Lower leg skin (tissue), 4 donors: ENCODE measurements at regions of chr21 and their contacts with region 1.

Region 1: DNA sequence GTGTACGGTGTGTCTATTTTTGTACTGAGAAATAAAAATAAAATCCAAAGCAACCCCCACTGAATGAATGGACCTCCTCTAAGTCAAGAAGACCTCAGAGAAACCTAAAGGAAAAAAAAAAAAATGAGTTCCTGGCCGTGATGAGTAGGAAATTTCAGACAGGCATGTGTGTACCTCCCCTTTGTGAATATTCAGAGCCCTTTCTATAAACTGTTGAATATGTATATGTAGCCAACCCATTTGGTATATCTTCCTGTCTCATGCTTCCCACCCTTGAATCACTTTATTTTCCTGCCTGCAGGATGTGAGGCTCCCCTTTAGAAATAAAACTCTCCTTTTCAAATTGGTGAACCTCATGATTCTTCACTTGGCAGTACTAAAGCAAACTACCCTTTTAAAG is 887.8 kb upstream of the NCAM2 start:
- DNase-seq: no peak
- H3K4me3 ChIP-seq: no peak overlapping the region
- CTCF ChIP-seq: no peak
- POLR2A ChIP-seq: no peak

Region 2: GRCh38 chr21:21559285-21560045 is 1449.1 kb after region 1 on chr21:
- intact Hi-C with region 1: loop called (anchors 5 kb)
- DNase-seq: no peak
- H3K4me3 ChIP-seq: no peak overlapping the region
- CTCF ChIP-seq: no peak
- POLR2A ChIP-seq: no peak